Brain microvascular endothelial cell (primary cell): ENCODE measurements at regions of chr14 and their contacts with region 1.

Region 1: DNA sequence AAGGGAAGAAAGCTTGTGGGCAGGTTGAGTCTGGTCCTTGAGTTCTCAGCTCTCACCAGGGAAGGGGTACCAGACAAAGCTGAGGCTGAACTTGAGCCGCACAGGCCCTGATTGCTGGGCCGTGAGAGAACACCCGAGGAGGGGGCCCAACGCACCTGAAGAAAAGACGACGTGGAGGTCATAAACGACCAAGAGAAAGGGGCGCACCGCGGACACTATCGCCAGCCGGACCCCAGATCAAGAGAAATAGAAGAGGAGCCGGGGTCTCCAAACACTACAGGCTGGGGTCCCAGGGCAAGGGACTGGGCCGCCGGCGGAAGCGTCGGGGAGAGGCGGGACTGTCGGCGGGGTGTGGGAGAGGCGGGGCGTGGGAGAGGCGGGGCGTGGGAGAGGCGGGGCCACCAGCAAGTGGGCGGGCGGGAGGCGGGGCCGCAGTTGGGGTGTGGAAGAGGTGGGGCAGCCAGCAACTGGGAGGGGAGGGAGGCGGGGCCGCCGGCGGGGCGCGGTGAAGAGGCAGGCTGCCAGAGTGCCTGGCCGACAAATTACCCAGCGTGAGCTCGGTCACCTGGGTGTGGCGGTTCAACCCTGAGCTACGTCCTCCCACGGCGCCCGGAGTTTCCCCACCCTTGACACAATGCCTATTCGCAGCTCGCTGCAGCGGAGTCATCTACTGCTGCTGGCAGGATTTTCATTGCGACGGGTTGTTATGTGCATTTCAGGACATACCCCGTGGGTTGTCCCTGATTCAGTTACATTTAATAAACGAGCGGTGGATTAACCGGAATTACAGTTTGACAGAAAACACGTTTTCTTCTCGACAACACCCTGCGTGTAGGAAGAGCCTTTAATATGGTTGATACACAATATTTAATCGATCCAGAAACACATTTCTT is 15.5 kb upstream of the NEMF start:
- DNase-seq: peak; percentile 90
- H3K4me3 ChIP-seq: peak overlapping the region; percentile 65
- H3K27ac ChIP-seq: peak overlapping the region; percentile 56
- H3K27me3 ChIP-seq: no peaks in the 10 kb centered on the region
- CTCF ChIP-seq: no peak

Region 2: GRCh38 chr14:49659526-49660455 is 208.3 kb before region 1 on chr14:
- in situ Hi-C with region 1: no loop called
- DNase-seq: no peak
- H3K4me3 ChIP-seq: no peak overlapping the region
- H3K27ac ChIP-seq: no peak overlapping the region
- H3K27me3 ChIP-seq: no peaks in the 10 kb centered on the region
- CTCF ChIP-seq: no peak

Region 3: DNA sequence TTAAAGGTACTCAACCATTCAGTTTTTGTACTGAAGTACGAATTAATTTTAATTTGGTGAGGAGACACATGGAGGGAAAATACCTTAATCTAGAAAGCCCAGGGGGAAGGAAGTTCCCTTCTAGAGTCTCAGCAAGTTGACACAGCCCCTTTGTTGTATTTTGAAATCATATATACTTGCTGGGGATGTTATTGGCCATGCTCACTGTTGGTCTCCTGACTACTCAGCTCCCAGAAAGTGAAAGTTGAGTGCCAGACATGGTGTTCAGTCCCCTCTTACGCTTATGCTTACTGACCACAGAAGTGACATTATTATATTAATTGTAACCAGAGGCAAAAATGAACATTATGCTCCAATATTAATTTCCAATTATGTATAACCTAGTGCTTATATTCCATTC is 52.9 kb after region 1 on chr14:
- in situ Hi-C with region 1: no loop called
- DNase-seq: no peak
- H3K4me3 ChIP-seq: no peak overlapping the region
- H3K27ac ChIP-seq: no peak overlapping the region
- H3K27me3 ChIP-seq: no peaks in the 10 kb centered on the region
- CTCF ChIP-seq: no peak

Region 4: GRCh38 chr14:50109342-50109741 is 241.3 kb after region 1 on chr14:
- in situ Hi-C with region 1: loop called (anchors 10 kb)
- DNase-seq: peak; percentile 31
- H3K4me3 ChIP-seq: no peak overlapping the region
- H3K27ac ChIP-seq: no peak overlapping the region
- H3K27me3 ChIP-seq: no peaks in the 10 kb centered on the region
- CTCF ChIP-seq: peak; percentile 70

Region 5: DNA sequence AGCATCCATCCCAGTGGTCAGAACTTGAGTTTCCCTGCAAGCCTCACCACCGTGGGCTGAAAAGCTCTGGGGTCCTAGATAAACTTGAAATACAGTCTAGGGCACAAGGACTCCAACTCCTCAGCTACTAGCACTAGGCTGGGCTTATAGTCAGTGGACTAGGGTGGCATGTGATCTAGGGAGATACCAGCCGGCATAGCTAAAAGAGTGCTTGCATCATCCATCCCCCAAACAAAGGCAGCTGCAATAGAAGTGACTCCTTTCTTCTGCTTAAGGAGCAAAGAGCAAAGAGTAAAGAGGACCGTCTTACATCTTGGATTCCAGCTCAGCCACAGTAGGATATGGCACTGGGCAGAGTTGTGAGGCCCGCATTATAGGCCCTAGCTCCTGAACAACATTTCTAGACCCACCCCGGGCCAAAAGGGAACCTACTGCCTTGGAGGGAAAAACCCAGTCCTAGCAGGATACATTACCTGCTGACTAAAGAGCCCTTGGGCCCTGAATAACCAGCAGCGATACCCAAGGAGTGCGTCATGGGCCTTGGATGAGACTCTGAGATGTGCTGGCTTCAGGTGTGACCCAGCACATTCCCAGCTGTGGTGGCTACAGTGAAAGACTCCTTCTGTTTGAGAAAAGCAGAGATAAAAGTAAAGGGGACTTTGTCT is 381.2 kb after region 1 on chr14:
- in situ Hi-C with region 1: no loop called
- DNase-seq: no peak
- H3K4me3 ChIP-seq: no peak overlapping the region
- H3K27ac ChIP-seq: no peak overlapping the region
- H3K27me3 ChIP-seq: no peaks in the 10 kb centered on the region
- CTCF ChIP-seq: no peak